Right ventricle myocardium inferior (tissue), 1 donor: ENCODE measurements at regions of chr3 and their contacts with region 1.

Region 1: DNA sequence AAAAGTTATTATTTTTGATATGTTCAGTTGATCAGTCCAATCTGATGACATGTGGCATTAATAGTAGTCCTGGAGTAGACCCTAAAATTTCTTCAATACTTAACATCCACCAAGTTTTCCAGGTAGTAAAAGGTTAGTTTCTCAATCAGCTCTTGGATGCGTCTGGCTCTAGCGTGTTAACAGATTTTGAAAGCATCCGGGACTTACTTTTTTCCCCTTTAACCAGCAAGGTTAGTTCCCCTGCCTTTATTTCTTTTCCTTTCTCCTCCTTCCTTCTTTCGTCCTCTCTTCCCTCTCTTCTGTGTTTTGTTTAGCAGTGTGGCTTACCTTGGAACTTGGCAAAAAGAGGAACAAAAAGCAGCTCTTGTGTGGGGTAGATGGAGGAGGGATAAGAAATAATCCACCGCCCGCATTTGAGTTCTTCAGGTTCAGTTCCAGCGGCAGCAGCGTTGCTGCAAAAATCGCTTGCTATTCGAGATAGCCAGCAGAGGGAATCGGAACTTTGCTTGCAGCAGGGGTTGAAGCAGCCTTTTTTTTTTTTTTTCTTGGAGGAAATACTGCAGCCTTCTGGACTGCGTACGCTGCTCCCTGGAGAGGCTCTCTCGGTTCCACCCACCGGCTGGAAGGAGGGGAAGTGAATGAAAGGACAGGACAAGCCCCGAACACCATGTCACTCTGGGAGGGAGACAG is at the start of gene RBMS3:
- DNase-seq: peak; percentile 90
- ATAC-seq: peak; percentile 95
- total RNA-seq, gene RBMS3: 32.7 TPM

Region 2: GRCh38 chr3:28916713-28917499 is 363.6 kb before region 1 on chr3:
- intact Hi-C with region 1: loop called (anchors 5 kb)
- DNase-seq: peak; percentile 74
- ATAC-seq: peak; percentile 95

Region 3: DNA sequence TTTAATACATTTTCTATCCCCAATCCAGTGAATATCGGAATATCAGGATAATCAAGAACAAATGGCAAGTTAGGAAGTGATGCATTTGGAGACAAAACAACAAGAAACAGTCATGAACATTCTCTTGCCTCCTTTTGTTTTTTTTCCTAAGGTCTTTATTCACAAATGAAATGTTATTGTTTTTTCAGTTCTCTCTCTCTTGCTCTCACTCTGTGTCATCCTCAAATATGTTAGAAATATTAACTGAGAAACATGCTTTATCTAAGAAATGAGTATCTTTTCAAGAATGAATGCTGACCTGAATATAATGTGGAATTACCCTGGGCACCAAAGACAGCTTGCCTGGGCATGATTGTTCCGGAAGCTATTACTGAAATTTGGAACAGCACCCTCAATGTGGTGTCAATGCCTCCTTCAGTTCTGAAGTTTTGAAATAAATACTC is 51.7 kb after region 1 on chr3:
- intact Hi-C with region 1: loop called (anchors 5 kb)
- DNase-seq: no peak
- ATAC-seq: no peak

Region 4: DNA sequence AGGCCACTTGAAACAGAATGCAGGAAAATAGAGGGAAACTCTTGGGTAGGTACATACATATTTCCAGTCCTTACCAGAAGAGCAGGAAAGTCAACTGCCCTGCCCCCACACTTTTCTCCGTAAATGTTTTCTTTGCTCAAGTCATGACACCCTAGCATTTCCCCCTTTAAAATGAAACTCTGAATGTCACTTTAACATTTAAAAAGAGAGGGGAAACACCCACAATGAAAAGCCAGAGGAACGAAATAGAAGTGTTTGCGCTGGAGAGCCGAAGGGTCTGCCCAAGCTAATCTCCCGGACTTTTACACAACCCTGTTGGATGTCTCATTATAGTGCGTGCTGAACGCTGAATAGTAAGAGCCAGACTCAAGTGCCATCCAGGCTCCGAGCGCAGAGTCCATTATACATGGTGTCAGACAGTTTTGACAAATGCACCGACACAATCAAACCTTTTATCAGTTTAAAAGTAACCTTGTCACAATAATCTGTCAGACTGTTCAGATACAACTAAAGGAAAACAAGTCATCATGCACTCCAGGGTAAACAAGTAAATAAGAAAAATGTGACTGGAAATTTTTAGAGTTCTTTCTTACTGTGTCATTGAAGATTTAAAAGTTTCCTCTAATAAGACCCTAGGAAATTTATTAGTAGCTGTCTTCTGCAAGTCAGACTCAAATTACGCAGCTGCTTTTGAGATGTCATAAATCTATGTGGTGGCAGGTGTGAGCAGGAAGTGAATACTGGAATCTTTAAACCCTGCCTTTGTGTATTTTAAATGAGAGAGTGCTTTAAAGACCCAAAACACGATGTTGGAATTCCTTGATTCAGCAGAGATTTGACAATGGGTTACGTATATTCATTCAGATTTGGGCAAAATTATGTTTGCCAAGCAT is 160.1 kb after region 1 on chr3:
- intact Hi-C with region 1: no loop called
- DNase-seq: no peak
- ATAC-seq: no peak

Region 5: DNA sequence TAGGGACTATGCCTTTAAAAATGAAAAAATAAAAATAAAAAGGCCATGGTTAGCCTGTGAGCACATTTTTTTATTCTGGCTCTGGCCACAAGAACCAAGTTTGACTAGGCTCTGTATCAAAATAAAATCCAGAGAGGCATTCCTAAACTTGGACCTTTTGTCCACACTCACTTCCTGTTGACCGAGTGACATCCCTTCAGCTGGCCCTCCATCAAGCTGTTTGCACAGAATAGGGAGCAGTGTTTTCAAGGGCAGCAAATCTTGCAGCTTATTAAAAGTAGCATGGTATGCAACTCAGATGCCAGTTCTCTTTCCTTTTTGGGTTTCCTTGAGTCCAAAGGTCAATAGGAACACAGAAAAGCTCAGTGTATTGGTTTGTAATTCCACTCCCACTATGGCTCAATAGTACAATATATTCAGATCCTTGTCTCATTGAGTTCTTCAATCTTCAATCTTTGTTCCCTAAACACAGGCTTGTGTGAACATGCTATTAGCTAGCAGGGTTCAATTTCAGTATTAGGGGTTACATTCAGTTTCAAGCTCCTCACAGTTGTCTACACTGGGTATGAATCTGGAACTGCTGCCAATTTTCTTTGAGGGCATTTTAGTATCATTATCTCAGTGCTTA is 244.8 kb after region 1 on chr3:
- intact Hi-C with region 1: loop called (anchors 5 kb)
- DNase-seq: peak; percentile 70
- ATAC-seq: peak; percentile 93

Region 6: DNA sequence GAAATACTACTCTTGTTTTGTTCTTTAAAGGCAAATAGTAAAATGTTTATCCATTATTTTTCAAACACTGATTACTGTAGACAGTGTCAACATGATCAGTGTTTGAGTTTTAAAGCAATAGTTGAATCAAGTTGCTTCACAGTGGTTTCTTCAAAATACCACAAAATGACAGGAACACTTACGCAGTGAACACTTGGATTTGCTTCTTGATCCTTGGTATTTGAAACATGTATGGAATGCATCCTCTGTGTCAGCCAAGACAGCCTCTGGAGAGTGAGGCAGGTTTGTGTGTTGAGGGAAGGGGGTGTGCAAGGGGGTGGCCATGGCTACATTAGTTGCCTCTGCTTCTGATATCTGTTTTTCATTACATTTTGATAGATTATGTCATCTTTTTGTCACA is 413.3 kb after region 1 on chr3:
- intact Hi-C with region 1: loop called (anchors 5 kb)
- DNase-seq: no peak
- ATAC-seq: no peak